Activated CD4-positive, alpha-beta T cell treated with anti-CD3 and anti-CD28 coated beads for 36 hours (primary cell): ENCODE measurements at regions of chr6 and their contacts with region 1.

Region 1: DNA sequence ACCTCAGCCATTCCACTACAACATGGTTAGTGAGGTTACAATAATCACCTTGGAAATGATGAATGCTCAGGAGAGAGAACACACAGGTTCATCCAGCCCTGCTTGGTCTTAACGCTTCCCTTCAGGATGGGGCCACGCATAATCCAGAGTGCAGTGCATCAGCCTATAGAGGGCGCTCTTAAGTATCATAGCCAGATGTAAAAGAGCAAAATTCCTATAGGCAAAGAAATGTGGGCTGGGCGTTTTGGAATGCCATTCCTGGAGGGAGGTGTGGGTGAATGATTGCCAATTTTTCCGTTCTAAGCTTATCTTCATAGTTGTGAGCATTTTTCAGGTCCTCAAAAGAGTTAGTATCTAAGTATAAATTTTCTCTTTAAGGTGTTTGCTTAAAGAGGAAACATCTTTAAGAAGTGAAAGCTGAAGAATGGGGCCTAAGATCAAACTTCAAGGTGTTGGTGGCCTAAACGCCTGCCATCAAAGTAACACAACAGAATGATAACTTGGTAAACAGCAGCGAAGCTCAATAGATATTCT is 1.8 kb downstream of the RIPOR2 start:
- DNase-seq: peak; percentile 59
- ATAC-seq: no peak
- H3K4me3 Mint-ChIP-seq: peak overlapping the region; percentile 93
- H3K27ac Mint-ChIP-seq: peak overlapping the region; percentile 95
- H3K4me1 Mint-ChIP-seq: peaks cover 88% of the 10 kb centered on the region
- H3K27me3 Mint-ChIP-seq: no peaks in the 10 kb centered on the region

Region 2: GRCh38 chr6:24774696-24775519 is 159.0 kb before region 1 on chr6 and contains the start of gene GMNN:
- CTCF ChIA-PET with region 1: interaction called, 4 read pairs
- POLR2A ChIA-PET with region 1: no interaction called
- intact Hi-C with region 1: loop called in 1 of 2 experiments (anchors 2 kb)
- DNase-seq: peak; percentile 99
- ATAC-seq: peak; percentile 93
- H3K4me3 Mint-ChIP-seq: peak within 1 kb of the TSS; percentile 98
- H3K27ac Mint-ChIP-seq: peak within 1 kb of the TSS; percentile 99
- H3K4me1 Mint-ChIP-seq: peaks cover 26% of the 10 kb centered on the region
- H3K27me3 Mint-ChIP-seq: no peaks in the 10 kb centered on the region
- total RNA-seq, gene GMNN: 74.0 to 76.1 TPM

Region 3: GRCh38 chr6:24891004-24891403 is 42.9 kb before region 1 on chr6:
- CTCF ChIA-PET with region 1: interaction called, 23 read pairs
- POLR2A ChIA-PET with region 1: interaction called, 3 read pairs
- intact Hi-C with region 1: no loop called
- DNase-seq: peak; percentile 39
- ATAC-seq: peak; percentile 67
- H3K4me3 Mint-ChIP-seq: no peak overlapping the region
- H3K27ac Mint-ChIP-seq: peak overlapping the region; percentile 93
- H3K4me1 Mint-ChIP-seq: peaks cover 87% of the 10 kb centered on the region
- H3K27me3 Mint-ChIP-seq: no peaks in the 10 kb centered on the region

Region 4: GRCh38 chr6:24919004-24919892 is 14.7 kb before region 1 on chr6:
- CTCF ChIA-PET with region 1: interaction called, 135 read pairs
- POLR2A ChIA-PET with region 1: interaction called, 5 read pairs
- intact Hi-C with region 1: loop called in 1 of 2 experiments (anchors 1 kb)
- DNase-seq: peak; percentile 52
- ATAC-seq: peak; percentile 21
- H3K4me3 Mint-ChIP-seq: peak overlapping the region; percentile 55
- H3K27ac Mint-ChIP-seq: peak overlapping the region; percentile 94
- H3K4me1 Mint-ChIP-seq: peaks cover 89% of the 10 kb centered on the region
- H3K27me3 Mint-ChIP-seq: no peaks in the 10 kb centered on the region

Region 5: GRCh38 chr6:24966381-24966780 is 32.4 kb after region 1 on chr6:
- CTCF ChIA-PET with region 1: interaction called, 16 read pairs
- POLR2A ChIA-PET with region 1: no interaction called
- intact Hi-C with region 1: no loop called
- DNase-seq: no peak
- ATAC-seq: no peak
- H3K4me3 Mint-ChIP-seq: no peak overlapping the region
- H3K27ac Mint-ChIP-seq: no peak overlapping the region
- H3K4me1 Mint-ChIP-seq: peaks cover 71% of the 10 kb centered on the region
- H3K27me3 Mint-ChIP-seq: no peaks in the 10 kb centered on the region

Region 6: DNA sequence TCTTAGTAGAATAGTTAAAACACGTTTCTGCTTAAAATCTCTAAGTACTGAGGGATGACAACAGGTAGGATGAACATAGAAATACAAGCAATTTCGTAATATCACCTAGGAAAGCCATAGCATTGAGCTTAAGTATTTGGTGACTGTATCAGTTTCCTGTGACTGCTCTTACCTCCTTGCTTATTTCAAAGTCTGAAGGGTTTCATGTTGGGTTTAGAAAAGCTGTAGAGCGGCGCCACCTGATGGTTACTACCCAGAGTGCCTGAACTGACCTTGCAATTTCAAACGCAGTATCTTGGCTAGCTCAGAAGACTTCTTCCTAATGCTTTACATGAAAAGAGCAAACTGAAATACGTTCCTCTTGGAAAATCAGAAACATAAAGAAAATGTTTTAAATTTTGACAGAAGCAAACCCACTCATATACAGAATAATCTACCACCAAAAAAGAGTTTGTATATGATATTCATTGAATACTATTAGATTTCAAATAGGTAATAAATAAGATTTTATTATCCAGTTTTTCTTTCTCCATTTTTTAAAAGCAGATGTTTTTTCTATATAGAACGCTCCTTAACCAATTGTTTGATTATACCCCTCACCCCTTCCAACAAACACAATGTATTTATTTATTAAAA is 84.1 kb after region 1 on chr6:
- CTCF ChIA-PET with region 1: interaction called, 37 read pairs
- POLR2A ChIA-PET with region 1: interaction called, 3 read pairs
- intact Hi-C with region 1: loop called in 1 of 2 experiments (anchors 1 kb)
- DNase-seq: peak; percentile 91
- ATAC-seq: peak; percentile 78
- H3K4me3 Mint-ChIP-seq: peak overlapping the region; percentile 1
- H3K27ac Mint-ChIP-seq: peak overlapping the region; percentile 74
- H3K4me1 Mint-ChIP-seq: peaks cover 55% of the 10 kb centered on the region
- H3K27me3 Mint-ChIP-seq: no peaks in the 10 kb centered on the region

Region 7: DNA sequence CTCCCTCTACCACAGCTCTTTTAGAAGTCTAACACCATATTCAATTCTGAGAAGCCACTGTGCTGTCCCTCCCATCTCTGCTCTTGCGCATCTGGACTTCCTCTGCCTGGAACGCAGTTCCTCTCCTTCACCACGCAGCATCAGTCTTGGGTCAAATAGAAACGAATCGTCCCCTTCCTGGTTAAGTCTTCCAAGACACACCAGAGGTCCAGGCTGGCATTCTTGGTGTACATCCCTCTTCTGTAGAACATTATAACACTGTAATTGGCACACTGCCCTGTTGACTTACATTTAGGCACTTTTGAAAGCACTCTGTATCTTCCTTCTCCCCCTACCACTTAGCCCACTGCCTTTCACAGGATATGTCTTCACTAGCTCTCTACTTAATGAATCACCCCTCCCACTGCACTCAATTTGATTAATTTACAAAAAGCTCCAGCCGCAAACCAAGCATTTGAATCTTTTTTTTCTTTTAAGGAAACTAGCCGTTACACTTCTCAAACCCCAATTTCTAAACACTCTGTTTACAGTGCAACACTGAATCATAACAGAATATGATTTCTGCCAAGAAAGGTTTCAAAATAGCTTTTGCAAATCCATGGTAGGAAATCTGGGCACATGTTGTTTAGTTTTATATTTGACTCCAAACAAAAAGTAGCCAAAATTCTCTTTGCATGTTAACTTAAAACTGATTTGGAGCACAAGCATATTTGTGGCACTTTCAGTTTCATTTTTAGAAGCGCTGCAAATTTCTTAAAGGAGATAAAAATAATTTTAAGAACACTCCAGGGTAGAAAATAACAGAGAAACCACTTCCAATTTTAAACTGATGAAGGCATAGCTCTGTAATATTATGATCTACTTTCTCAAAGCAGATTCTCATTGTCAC is 204.5 kb after region 1 on chr6:
- CTCF ChIA-PET with region 1: interaction called, 3 read pairs
- POLR2A ChIA-PET with region 1: no interaction called
- intact Hi-C with region 1: loop called (anchors 1 to 2 kb)
- DNase-seq: peak; percentile 81
- ATAC-seq: peak; percentile 93
- H3K4me3 Mint-ChIP-seq: peak overlapping the region; percentile 81
- H3K27ac Mint-ChIP-seq: peak overlapping the region; percentile 97
- H3K4me1 Mint-ChIP-seq: peaks cover 31% of the 10 kb centered on the region
- H3K27me3 Mint-ChIP-seq: no peaks in the 10 kb centered on the region

Region 8: GRCh38 chr6:25346064-25346463 is 412.1 kb after region 1 on chr6:
- CTCF ChIA-PET with region 1: no interaction called
- POLR2A ChIA-PET with region 1: no interaction called
- intact Hi-C with region 1: no loop called
- DNase-seq: no peak
- ATAC-seq: no peak
- H3K4me3 Mint-ChIP-seq: no peak overlapping the region
- H3K27ac Mint-ChIP-seq: no peak overlapping the region
- H3K4me1 Mint-ChIP-seq: peaks cover 8% of the 10 kb centered on the region
- H3K27me3 Mint-ChIP-seq: no peaks in the 10 kb centered on the region